ENCODE measurements at regions of chr10 and their contacts with region 1.

Region 1: DNA sequence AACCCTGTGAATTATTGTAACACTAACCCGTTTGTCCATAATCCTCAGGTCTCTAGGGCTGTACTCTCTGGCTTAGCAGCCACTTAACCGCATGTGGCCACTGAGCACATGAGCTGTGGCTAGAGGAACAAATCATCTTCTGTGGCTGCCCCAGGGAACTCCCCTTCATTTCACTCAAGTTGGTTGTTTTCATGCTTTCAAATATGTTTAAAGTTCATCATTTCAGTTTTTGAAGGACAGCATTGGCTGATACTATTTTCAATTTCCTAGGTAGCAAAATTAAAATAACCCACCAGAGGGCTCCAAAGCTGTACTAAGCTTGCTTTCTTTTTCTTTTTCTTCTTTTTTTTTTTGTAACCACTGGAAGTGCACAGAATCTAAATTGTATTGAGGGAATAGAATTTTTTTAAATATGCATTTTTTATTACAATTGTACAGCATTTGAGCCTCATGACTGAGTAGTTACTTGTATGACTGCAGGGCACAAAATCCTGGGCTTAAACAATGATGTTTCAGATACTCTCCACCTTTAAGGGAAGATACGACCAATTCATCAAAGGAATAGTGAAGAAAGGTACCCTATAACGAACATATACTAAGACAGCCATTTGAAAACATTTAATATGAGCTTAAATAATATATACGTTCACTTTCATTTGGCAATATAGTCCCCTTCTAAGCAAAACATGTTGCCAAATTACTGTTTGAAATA is 38.6 kb downstream of the MRC1 start:
- H3K4me3 ChIP-seq: no peak overlapping the region
- H3K27ac ChIP-seq: no peak overlapping the region
- H3K4me1 ChIP-seq: no peaks in the 10 kb centered on the region
- CTCF ChIP-seq: no peak

Region 2: GRCh38 chr10:18216483-18216882 is 368.7 kb after region 1 on chr10:
- CTCF ChIA-PET with region 1: interaction called, 16 read pairs
- POLR2A ChIA-PET with region 1: no interaction called
- H3K4me3 ChIP-seq: no peak overlapping the region
- H3K27ac ChIP-seq: no peak overlapping the region
- H3K4me1 ChIP-seq: no peaks in the 10 kb centered on the region
- CTCF ChIP-seq: no peak

Measured in HEK293 (cell line).